Activated CD8-positive, alpha-beta T cell treated with anti-CD3 and anti-CD28 coated beads, Interleukin-2, amount 10 ng/mL, durations not matched to agents 7 days and 5 days (primary cell): ENCODE measurements at regions of chr6 and their contacts with region 1.

Region 1: GRCh38 chr6:137866914-137867684 is at the start of gene TNFAIP3:
- DNase-seq: peak; percentile 94
- ATAC-seq: peak; percentile 82
- H3K4me3 Mint-ChIP-seq: peak within 1 kb of the TSS; percentile 94
- H3K27ac Mint-ChIP-seq: peak within 1 kb of the TSS; percentile 92
- H3K4me1 Mint-ChIP-seq: peaks cover 59% of the 10 kb centered on the region
- H3K27me3 Mint-ChIP-seq: no peaks in the 10 kb centered on the region
- total RNA-seq, gene TNFAIP3: 29.6 to 34.5 TPM

Region 2: DNA sequence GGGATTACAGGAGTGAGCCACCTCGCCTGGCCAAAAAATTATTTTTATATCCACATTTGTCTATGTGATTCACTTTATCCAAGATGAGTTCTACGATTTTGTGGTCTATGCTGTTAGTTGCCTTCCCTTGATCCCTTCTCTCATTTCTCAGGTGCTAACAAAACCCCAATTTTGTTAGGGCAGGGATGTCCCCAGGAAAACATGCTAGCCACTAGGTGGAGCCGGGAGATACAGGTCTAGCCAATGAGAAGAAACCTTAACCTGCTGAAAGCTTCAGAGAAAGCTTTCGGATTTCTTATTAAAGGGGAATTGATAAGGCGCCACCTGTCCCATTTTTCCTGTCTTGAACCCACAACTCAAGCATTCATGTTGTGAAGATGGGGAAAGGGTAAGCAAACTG is 205.5 kb before region 1 on chr6:
- CTCF ChIA-PET with region 1: interaction called, 11 read pairs
- POLR2A ChIA-PET with region 1: interaction called, 4 read pairs
- DNase-seq: peak; percentile 66
- ATAC-seq: peak; percentile 57
- H3K4me3 Mint-ChIP-seq: no peak overlapping the region
- H3K27ac Mint-ChIP-seq: no peak overlapping the region
- H3K4me1 Mint-ChIP-seq: peaks cover 28% of the 10 kb centered on the region
- H3K27me3 Mint-ChIP-seq: no peaks in the 10 kb centered on the region

Region 3: GRCh38 chr6:137722749-137723272 is 144.3 kb before region 1 on chr6:
- CTCF ChIA-PET with region 1: interaction called, 12 read pairs
- POLR2A ChIA-PET with region 1: interaction called, 3 read pairs
- DNase-seq: no peak
- ATAC-seq: peak; percentile 69
- H3K4me3 Mint-ChIP-seq: no peak overlapping the region
- H3K27ac Mint-ChIP-seq: no peak overlapping the region
- H3K4me1 Mint-ChIP-seq: peaks cover 24% of the 10 kb centered on the region
- H3K27me3 Mint-ChIP-seq: peaks cover 7% of the 10 kb centered on the region

Region 4: DNA sequence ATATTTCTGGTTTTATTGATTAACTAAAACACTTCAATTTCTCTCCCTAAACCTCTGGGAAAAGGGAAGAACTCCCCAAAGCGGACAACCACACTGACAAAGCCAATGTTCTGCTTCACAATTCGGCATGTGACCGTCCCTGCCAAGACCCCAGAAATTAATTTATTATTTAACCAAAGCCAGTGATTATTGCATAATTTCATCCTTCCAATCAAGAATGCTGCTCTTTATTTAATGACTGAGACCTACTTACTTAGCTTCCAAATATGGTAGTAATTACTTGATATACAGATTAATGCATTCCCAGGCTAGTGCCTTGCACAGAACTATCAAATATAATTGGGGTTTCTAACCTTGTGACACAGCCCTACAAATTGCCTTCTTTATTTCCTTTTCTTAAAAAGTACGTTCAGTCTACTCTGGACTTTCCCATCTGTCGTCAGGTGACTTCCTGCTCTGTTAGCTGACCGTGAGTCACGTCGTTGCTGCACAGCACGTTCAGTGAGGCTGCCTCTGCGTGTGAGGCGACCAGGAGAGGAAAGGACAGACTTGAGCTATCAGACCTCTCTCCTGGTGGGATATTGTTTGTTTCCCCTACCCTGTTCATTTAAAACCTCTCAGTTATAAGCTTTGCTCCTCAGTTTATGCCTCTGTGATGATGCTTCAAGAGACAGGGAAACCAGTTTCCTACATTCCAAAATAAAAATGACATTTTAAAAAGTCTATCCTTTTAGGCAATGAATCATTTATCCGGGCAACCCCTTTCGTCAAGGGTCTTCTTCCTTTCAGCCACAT is 55.8 kb before region 1 on chr6:
- CTCF ChIA-PET with region 1: interaction called, 62 read pairs
- POLR2A ChIA-PET with region 1: interaction called, 25 read pairs
- DNase-seq: peak; percentile 84
- ATAC-seq: peak; percentile 95
- H3K4me3 Mint-ChIP-seq: peak overlapping the region; percentile 35
- H3K27ac Mint-ChIP-seq: peak overlapping the region; percentile 72
- H3K4me1 Mint-ChIP-seq: peaks cover 42% of the 10 kb centered on the region
- H3K27me3 Mint-ChIP-seq: no peaks in the 10 kb centered on the region

Region 5: DNA sequence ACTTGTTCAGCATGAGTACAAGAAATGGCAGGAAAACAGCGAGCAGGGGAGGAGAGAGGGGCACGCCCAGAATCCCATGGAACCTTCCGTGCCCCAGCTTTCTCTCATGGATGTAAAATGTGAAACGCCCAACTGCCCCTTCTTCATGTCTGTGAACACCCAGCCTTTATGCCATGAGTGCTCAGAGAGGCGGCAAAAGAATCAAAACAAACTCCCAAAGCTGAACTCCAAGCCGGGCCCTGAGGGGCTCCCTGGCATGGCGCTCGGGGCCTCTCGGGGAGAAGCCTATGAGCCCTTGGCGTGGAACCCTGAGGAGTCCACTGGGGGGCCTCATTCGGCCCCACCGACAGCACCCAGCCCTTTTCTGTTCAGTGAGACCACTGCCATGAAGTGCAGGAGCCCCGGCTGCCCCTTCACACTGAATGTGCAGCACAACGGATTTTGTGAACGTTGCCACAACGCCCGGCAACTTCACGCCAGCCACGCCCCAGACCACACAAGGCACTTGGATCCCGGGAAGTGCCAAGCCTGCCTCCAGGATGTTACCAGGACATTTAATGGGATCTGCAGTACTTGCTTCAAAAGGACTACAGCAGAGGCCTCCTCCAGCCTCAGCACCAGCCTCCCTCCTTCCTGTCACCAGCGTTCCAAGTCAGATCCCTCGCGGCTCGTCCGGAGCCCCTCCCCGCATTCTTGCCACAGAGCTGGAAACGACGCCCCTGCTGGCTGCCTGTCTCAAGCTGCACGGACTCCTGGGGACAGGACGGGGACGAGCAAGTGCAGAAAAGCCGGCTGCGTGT is 11.6 kb after region 1 on chr6:
- CTCF ChIA-PET with region 1: interaction called, 142 read pairs
- POLR2A ChIA-PET with region 1: interaction called, 45 read pairs
- DNase-seq: no peak
- ATAC-seq: no peak
- H3K4me3 Mint-ChIP-seq: no peak overlapping the region
- H3K27ac Mint-ChIP-seq: peak overlapping the region; percentile 46
- H3K4me1 Mint-ChIP-seq: peaks cover 75% of the 10 kb centered on the region
- H3K27me3 Mint-ChIP-seq: no peaks in the 10 kb centered on the region

Region 6: DNA sequence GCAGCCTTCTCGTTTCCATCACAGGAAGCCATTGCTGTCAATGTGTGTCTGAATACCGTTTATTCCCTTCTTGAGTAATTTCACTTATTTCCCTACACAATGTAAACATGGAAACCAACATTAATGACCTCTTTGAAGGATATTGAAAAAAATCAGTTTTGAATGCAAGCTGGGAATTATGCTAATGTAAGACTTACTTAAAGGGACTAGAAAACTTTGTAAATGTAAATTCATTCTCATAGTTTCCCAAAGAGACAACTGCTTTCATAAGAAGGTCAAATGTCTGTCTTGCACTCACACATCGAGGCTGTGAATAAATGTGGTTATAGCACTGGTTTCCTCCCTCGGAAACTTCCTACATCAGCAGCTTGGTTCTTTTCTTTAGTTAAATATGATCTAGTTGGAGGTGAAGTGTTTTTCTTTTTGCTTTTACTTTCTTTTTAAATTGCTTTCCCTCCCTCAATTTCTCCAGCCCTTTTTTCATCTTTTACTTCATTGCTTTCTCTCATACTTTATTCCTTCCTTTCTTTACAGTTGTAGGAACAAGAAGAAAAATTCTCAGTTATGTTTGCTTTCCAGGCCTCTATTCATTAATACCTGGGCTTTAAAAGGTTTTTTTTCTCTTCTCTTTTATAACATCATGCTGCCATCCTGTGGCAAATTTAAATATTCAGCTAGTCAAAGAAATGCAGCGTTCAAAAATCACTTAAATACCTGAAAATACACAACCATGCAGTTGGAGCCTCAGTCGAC is 108.3 kb after region 1 on chr6:
- CTCF ChIA-PET with region 1: interaction called, 191 read pairs
- POLR2A ChIA-PET with region 1: interaction called, 10 read pairs
- DNase-seq: peak; percentile 59
- ATAC-seq: peak; percentile 86
- H3K4me3 Mint-ChIP-seq: peak overlapping the region; percentile 76
- H3K27ac Mint-ChIP-seq: peak overlapping the region; percentile 92
- H3K4me1 Mint-ChIP-seq: peaks cover 51% of the 10 kb centered on the region
- H3K27me3 Mint-ChIP-seq: no peaks in the 10 kb centered on the region